ENCODE measurements at regions of chr12 and their contacts with region 1.

Region 1: DNA sequence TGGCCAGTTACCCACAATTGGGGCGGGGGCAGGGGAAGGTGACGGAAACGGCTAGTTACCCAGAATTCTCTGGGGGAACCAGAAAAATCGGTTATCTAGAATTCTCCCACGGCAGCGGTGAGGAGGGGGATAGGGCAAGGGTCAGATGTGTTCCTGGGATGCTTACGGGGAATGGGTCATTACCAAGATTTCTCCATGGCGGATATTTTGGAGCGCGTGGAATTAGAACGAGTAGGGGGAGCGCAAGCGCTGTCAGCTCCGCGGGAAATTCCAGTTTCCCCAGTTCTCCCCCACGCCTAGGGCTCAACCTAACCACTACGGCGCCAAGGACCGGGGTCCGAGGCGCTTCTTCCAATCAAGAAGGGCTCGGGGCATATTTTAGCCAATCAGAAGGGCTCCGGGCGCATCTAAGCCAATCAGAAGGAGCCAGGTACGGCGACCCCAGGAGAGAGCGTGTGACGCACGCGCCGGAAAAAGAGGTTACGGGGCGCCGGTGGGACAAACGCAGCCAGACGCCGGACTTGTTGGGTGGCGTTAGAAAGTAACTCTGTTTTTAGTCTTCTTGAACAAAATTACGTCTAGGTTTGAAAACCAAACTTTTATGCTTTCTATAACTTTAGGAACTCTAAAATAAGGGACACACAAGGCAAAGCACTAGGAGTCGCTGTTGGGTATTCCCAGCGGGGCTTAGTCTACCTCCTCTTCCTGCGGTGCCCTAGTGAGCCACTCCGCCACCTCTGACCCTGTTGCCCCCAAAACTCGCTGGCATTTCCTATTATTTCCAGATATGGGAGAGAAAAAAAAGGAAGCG is at the start of gene PAN2:
- DNase-seq: peak; percentile 94
- H3K4me3 Mint-ChIP-seq: peak within 1 kb of the TSS; percentile 87
- H3K27ac Mint-ChIP-seq: peak within 1 kb of the TSS; percentile 100
- H3K4me1 Mint-ChIP-seq: peaks cover 42% of the 10 kb centered on the region
- H3K27me3 Mint-ChIP-seq: no peaks in the 10 kb centered on the region
- total RNA-seq, gene PAN2: 20.9 and 21.3 TPM in 2 replicates

Region 2: GRCh38 chr12:56266693-56267442 is 67.0 kb before region 1 on chr12 and contains the start of gene COQ10A:
- intact Hi-C with region 1: loop called (anchors 2 kb)
- DNase-seq: peak; percentile 84
- H3K4me3 Mint-ChIP-seq: peak within 1 kb of the TSS; percentile 96
- H3K27ac Mint-ChIP-seq: peak within 1 kb of the TSS; percentile 87
- H3K4me1 Mint-ChIP-seq: peaks cover 15% of the 10 kb centered on the region
- H3K27me3 Mint-ChIP-seq: no peaks in the 10 kb centered on the region
- total RNA-seq, gene COQ10A: 17.8 and 18.0 TPM in 2 replicates

Region 3: GRCh38 chr12:56315622-56316473 is 18.0 kb before region 1 on chr12 and contains the start of gene CNPY2:
- intact Hi-C with region 1: loop called (anchors 1 kb)
- DNase-seq: peak; percentile 83
- H3K4me3 Mint-ChIP-seq: peak within 1 kb of the TSS; percentile 98
- H3K27ac Mint-ChIP-seq: peak within 1 kb of the TSS; percentile 96
- H3K4me1 Mint-ChIP-seq: peaks cover 12% of the 10 kb centered on the region
- H3K27me3 Mint-ChIP-seq: no peaks in the 10 kb centered on the region
- total RNA-seq, gene CNPY2: 170 and 172 TPM in 2 replicates

Region 4: DNA sequence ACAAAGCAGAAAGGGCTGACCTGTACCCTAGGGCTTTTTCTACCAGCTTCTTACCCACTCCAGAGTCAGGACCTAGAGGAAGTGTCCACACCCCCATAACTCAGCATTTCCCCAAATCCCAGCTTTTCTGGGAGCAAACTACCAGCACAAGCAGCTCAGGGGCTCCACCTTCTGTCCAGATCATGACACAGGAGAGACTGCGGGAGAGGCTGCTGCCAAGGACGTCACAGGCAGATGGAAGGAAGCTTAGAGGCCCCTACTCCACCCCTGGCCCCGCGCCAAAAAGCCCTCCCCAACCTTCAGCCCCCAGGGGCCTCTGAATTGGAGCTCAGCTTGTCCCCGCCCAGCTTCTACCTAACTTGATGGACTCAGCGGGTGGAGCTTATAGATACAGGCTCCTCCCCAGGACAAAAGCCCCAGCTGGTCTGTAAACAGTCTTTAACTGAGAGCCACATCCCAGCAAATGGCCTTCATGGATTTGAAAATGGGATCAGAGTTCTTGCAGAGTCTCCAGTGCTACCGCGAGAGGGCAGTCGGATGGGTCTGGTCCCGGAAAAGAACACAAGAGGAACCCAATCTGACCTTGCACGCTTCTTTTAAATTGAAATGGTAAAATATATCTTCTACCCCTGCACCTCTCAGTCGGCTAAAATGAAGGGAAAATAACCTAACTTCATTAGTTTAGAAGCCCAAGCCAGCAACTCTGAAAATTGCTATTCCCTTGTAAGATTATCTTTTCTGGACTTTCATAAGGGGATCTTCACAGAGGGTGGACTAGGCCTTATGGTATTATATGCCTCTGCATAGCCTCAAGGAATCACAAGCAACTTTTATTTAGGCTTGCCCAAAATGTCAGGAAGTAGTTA is 303.0 kb after region 1 on chr12:
- intact Hi-C with region 1: loop called (anchors 5 kb)
- DNase-seq: peak; percentile 79
- H3K4me3 Mint-ChIP-seq: peak overlapping the region; percentile 98
- H3K27ac Mint-ChIP-seq: peak overlapping the region; percentile 92
- H3K4me1 Mint-ChIP-seq: peaks cover 62% of the 10 kb centered on the region
- H3K27me3 Mint-ChIP-seq: no peaks in the 10 kb centered on the region

Region 5: DNA sequence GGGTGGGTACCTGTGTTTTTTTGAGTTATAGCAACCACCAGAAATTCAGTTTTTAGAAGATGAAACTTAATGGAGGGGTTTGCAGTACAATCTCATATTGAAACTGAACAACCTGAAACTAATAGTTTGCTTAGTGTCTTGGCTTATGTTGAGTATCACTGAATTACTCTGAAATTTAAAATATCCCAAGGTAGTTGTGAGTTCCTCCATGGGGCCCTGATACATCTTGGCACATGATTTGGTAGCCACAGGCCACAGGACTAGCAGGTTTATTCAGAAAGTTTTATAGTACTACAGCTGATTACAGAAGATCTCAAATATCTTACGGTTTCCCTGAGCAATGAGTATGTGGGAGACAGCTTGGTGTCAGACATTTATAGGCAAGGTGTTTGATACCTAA is 343.8 kb after region 1 on chr12:
- intact Hi-C with region 1: no loop called
- DNase-seq: no peak
- H3K4me3 Mint-ChIP-seq: no peak overlapping the region
- H3K27ac Mint-ChIP-seq: peak overlapping the region; percentile 55
- H3K4me1 Mint-ChIP-seq: peaks cover 40% of the 10 kb centered on the region
- H3K27me3 Mint-ChIP-seq: no peaks in the 10 kb centered on the region

Measured in activated T-helper 1 cell treated with anti-CD3 and anti-CD28 coated beads, Interleukin-12 subunit alpha, Interleukin-12 subunit beta, Interleukin-2, Interleukin-4 antibody, amounts not matched to agents 30 ng/mL and 10 ng/mL and 1 ng/mL, durations not matched to agents 14 hours and 24 hours and 36 hours (primary cell).